Left lung (tissue), 14 donors: ENCODE measurements at regions of chr15 and their contacts with region 1.

Region 1: GRCh38 chr15:50675536-50676144 is 11.0 kb downstream of the TRPM7 start:
- DNase-seq: peak in 2 of 4 donors; percentile 52 to 53
- ATAC-seq: peak; percentile 33
- H3K4me3 ChIP-seq: no peak overlapping the region
- H3K27ac ChIP-seq: no peak overlapping the region
- H3K4me1 ChIP-seq: peaks cover 0 to 23% of the 10 kb centered on the region in 2 donors
- H3K27me3 ChIP-seq: no peaks in the 10 kb centered on the region
- CTCF ChIP-seq: peak; percentile 59 to 88

Region 2: DNA sequence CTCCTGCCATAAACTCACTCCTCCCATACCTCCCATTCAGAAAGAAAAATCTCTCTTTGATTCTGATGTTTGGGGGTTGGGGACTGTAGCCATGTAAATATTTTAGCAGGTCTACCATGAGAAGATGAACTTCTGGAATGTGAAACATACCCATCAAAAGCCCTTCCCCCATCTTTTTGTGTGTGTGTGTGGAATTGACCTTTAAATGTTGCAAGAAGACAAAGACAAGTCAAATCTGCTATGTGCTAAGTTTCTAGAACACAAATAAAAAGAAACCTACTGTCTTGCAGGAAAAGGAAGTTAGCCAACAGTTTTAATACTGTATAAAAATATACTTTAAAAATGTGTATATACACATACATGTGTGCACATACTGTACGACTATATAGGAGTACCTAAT is 99.5 kb before region 1 on chr15:
- intact Hi-C with region 1: no loop called
- DNase-seq: no peak
- ATAC-seq: no peak
- H3K4me3 ChIP-seq: no peak overlapping the region
- H3K27ac ChIP-seq: no peak overlapping the region
- H3K4me1 ChIP-seq: peaks cover 0 to 15% of the 10 kb centered on the region in 2 donors
- H3K27me3 ChIP-seq: no peaks in the 10 kb centered on the region
- CTCF ChIP-seq: no peak

Region 3: GRCh38 chr15:50876989-50877360 is 201.3 kb after region 1 on chr15:
- intact Hi-C with region 1: loop called in 1 of 2 experiments (anchors 5 kb)
- DNase-seq: peak in 3 of 4 donors; percentile 48 to 80 (median 76)
- ATAC-seq: peak; percentile 90
- H3K4me3 ChIP-seq: peak overlapping the region; percentile 14 to 22
- H3K27ac ChIP-seq: no peak overlapping the region
- H3K4me1 ChIP-seq: peaks cover 0 to 48% of the 10 kb centered on the region in 2 donors
- H3K27me3 ChIP-seq: no peaks in the 10 kb centered on the region
- CTCF ChIP-seq: peak; percentile 86 to 92

Region 4: DNA sequence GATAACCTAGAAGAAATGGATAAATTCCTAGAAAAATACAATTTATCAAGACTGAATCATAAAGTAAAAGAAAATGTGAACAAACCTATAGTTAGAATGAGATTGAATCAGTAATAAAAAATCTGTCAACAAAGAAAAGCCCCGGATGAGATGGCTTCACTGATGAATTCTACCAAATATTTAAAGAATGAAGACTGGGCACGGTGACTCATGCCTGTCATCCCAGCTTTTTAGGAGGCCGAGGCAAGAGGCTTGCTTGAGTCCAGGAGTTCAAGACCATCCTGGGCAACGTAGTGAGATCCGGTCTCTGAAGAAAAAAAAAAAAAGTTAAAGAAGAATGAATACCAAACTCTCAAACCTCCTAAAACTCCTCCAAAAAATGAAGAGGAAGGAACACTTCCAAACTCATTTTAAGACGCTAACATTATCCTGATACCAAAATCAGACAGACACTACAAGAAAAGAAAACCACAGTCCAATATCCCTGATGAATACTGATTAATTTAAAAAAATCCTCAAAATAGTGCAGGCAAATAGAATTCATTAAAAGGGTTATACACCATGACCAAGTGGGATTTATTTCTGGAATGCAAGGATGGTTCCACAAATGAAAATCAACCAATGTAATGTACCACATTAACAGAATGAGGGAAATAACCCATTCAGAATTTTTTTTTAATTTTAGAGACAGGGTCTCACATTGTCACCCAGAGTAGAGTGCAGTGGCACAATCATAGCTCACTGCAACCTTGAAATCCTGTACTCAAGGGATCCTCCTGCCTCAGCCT is 215.3 kb after region 1 on chr15:
- intact Hi-C with region 1: loop called in 1 of 2 experiments (anchors 10 kb)
- DNase-seq: no peak
- ATAC-seq: no peak
- H3K4me3 ChIP-seq: no peak overlapping the region
- H3K27ac ChIP-seq: no peak overlapping the region
- H3K4me1 ChIP-seq: peaks cover 0 to 9% of the 10 kb centered on the region in 2 donors
- H3K27me3 ChIP-seq: no peaks in the 10 kb centered on the region
- CTCF ChIP-seq: no peak